GM12878 (cell line): ENCODE measurements at regions of chr9 and their contacts with region 1.

Region 1: GRCh38 chr9:87324613-87325194 is 173.0 kb upstream of the DAPK1 start:
- DNase-seq: peak; percentile 5
- ATAC-seq: peak; percentile 80
- H3K4me3 ChIP-seq: no peak overlapping the region
- H3K27ac ChIP-seq: no peak overlapping the region
- H3K4me1 ChIP-seq: no peaks in the 10 kb centered on the region
- H3K27me3 ChIP-seq: no peaks in the 10 kb centered on the region
- CTCF ChIP-seq: peak; percentile 57 to 81 (median 66)
- EP300 ChIP-seq: no peak
- POLR2A ChIP-seq: no peak
- RAD21 ChIP-seq: peak; percentile 95

Region 2: GRCh38 chr9:86413966-86414880 is 910.5 kb before region 1 on chr9:
- CTCF ChIA-PET with region 1: interaction called, 12 read pairs
- POLR2A ChIA-PET with region 1: no interaction called
- RAD21 ChIA-PET with region 1: interaction called, 8 read pairs
- SMC1A ChIA-PET with region 1: interaction called, 8 read pairs
- in situ Hi-C with region 1: no loop called
- intact Hi-C with region 1: loop called (anchors 1 kb)
- DNase-seq: no peak
- ATAC-seq: peak; percentile 60
- H3K4me3 ChIP-seq: no peak overlapping the region
- H3K27ac ChIP-seq: no peak overlapping the region
- H3K4me1 ChIP-seq: no peaks in the 10 kb centered on the region
- H3K27me3 ChIP-seq: no peaks in the 10 kb centered on the region; a peak in 1 of 4 replicates
- CTCF ChIP-seq: peak; percentile 34 to 58 (median 54); a peak in 5 of 6 replicates
- EP300 ChIP-seq: no peak
- POLR2A ChIP-seq: no peak
- RAD21 ChIP-seq: peak; percentile 61

Region 3: GRCh38 chr9:86434039-86434726 is 890.5 kb before region 1 on chr9:
- CTCF ChIA-PET with region 1: interaction called, 26 read pairs
- POLR2A ChIA-PET with region 1: no interaction called
- RAD21 ChIA-PET with region 1: interaction called, 10 read pairs
- SMC1A ChIA-PET with region 1: interaction called, 34 read pairs
- in situ Hi-C with region 1: loop called (anchors 5 kb)
- intact Hi-C with region 1: loop called (anchors 1 kb)
- DNase-seq: no peak
- ATAC-seq: peak; percentile 58; the same call in 2 of the 3 replicates
- H3K4me3 ChIP-seq: no peak overlapping the region
- H3K27ac ChIP-seq: no peak overlapping the region
- H3K4me1 ChIP-seq: no peaks in the 10 kb centered on the region
- H3K27me3 ChIP-seq: no peaks in the 10 kb centered on the region
- CTCF ChIP-seq: peak; percentile 57 to 79 (median 68)
- EP300 ChIP-seq: no peak
- POLR2A ChIP-seq: no peak
- RAD21 ChIP-seq: peak; percentile 81

Region 4: GRCh38 chr9:86486891-86487837 is 837.5 kb before region 1 on chr9:
- CTCF ChIA-PET with region 1: interaction called, 35 read pairs
- POLR2A ChIA-PET with region 1: no interaction called
- RAD21 ChIA-PET with region 1: interaction called, 8 read pairs
- SMC1A ChIA-PET with region 1: interaction called, 4 read pairs
- in situ Hi-C with region 1: loop called (anchors 5 kb)
- intact Hi-C with region 1: loop called (anchors 1 kb)
- DNase-seq: no peak
- ATAC-seq: peak; percentile 65
- H3K4me3 ChIP-seq: no peak overlapping the region
- H3K27ac ChIP-seq: no peak overlapping the region
- H3K4me1 ChIP-seq: no peaks in the 10 kb centered on the region
- H3K27me3 ChIP-seq: no peaks in the 10 kb centered on the region
- CTCF ChIP-seq: peak; percentile 40 to 55 (median 50); a peak in 5 of 6 replicates
- EP300 ChIP-seq: no peak
- POLR2A ChIP-seq: no peak
- RAD21 ChIP-seq: peak; percentile 83

Region 5: GRCh38 chr9:86614871-86615849 is 709.5 kb before region 1 on chr9:
- CTCF ChIA-PET with region 1: interaction called, 9 read pairs
- POLR2A ChIA-PET with region 1: no interaction called
- RAD21 ChIA-PET with region 1: no interaction called
- SMC1A ChIA-PET with region 1: interaction called, 4 read pairs
- in situ Hi-C with region 1: loop called (anchors 10 kb)
- intact Hi-C with region 1: loop called (anchors 5 kb)
- DNase-seq: no peak
- ATAC-seq: peak; percentile 51; the same call in 2 of the 3 replicates
- H3K4me3 ChIP-seq: no peak overlapping the region
- H3K27ac ChIP-seq: no peak overlapping the region
- H3K4me1 ChIP-seq: no peaks in the 10 kb centered on the region
- H3K27me3 ChIP-seq: no peaks in the 10 kb centered on the region
- CTCF ChIP-seq: peak; percentile 22 to 45 (median 31); a peak in 3 of 6 replicates
- EP300 ChIP-seq: no peak
- POLR2A ChIP-seq: no peak
- RAD21 ChIP-seq: 0 out of 2 replicates have a peak, but pooled peaks have one; percentile 23

Region 6: GRCh38 chr9:86948074-86948929 is 376.4 kb before region 1 on chr9:
- CTCF ChIA-PET with region 1: interaction called, 4 read pairs
- POLR2A ChIA-PET with region 1: no interaction called
- RAD21 ChIA-PET with region 1: no interaction called
- SMC1A ChIA-PET with region 1: no interaction called
- in situ Hi-C with region 1: no loop called
- intact Hi-C with region 1: loop called (anchors 10 kb)
- DNase-seq: no peak
- ATAC-seq: peak; percentile 94
- H3K4me3 ChIP-seq: peak overlapping the region; percentile 33; the same call in 1 of the 2 replicates
- H3K27ac ChIP-seq: no peak overlapping the region
- H3K4me1 ChIP-seq: no peaks in the 10 kb centered on the region
- H3K27me3 ChIP-seq: peaks cover 6 to 7% of the 10 kb centered on the region in 2 experiments
- CTCF ChIP-seq: peak; percentile 62 to 81 (median 78)
- EP300 ChIP-seq: no peak
- POLR2A ChIP-seq: no peak
- RAD21 ChIP-seq: 0 out of 2 replicates have a peak, but pooled peaks have one; percentile 39

Region 7: DNA sequence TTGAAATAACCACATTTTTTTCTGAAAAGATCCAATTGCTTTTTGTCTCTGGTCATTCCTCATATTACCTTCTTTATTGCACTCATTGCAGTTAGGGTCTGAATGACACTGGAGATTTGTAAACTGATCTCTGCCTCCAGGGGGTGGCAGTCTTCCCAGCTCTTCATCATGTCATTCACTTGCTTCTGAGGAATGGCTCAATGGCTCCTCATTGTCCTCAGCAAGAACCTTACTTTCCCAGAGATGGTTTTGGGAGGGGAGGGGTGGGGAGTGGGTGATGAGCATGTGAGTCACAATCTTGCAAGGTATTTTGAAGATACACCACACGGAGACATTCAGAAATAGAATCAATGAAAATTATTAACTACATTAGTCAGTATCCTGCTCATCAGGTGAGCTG is 217.6 kb before region 1 on chr9:
- CTCF ChIA-PET with region 1: interaction called, 6 read pairs
- POLR2A ChIA-PET with region 1: no interaction called
- RAD21 ChIA-PET with region 1: interaction called, 3 read pairs
- SMC1A ChIA-PET with region 1: interaction called, 6 read pairs
- in situ Hi-C with region 1: no loop called
- intact Hi-C with region 1: loop called (anchors 2 kb)
- DNase-seq: no peak
- ATAC-seq: no peak
- H3K4me3 ChIP-seq: no peak overlapping the region
- H3K27ac ChIP-seq: no peak overlapping the region
- H3K4me1 ChIP-seq: no peaks in the 10 kb centered on the region
- H3K27me3 ChIP-seq: peaks cover 0 to 1% of the 10 kb centered on the region in 2 experiments; a peak in 2 of 4 replicates
- CTCF ChIP-seq: peak; percentile 31 to 37 (median 31); a peak in 4 of 6 replicates
- EP300 ChIP-seq: no peak
- POLR2A ChIP-seq: no peak
- RAD21 ChIP-seq: peak; percentile 33; the same call in 1 of the 2 replicates

Region 8: GRCh38 chr9:87445646-87446045 is 120.9 kb after region 1 on chr9:
- CTCF ChIA-PET with region 1: no interaction called
- POLR2A ChIA-PET with region 1: no interaction called
- RAD21 ChIA-PET with region 1: no interaction called
- SMC1A ChIA-PET with region 1: no interaction called
- in situ Hi-C with region 1: no loop called
- intact Hi-C with region 1: no loop called
- DNase-seq: peak; percentile 44
- ATAC-seq: peak; percentile 100
- H3K4me3 ChIP-seq: peak overlapping the region; percentile 49; the same call in 1 of the 2 replicates
- H3K27ac ChIP-seq: no peak overlapping the region; the same call in 1 of the 2 replicates
- H3K4me1 ChIP-seq: peaks cover 3% of the 10 kb centered on the region; the same call in 1 of the 2 replicates
- H3K27me3 ChIP-seq: no peaks in the 10 kb centered on the region
- CTCF ChIP-seq: no peak
- EP300 ChIP-seq: no peak
- POLR2A ChIP-seq: no peak
- RAD21 ChIP-seq: no peak

Region 9: GRCh38 chr9:87547667-87548066 is 223.0 kb after region 1 on chr9:
- CTCF ChIA-PET with region 1: no interaction called
- POLR2A ChIA-PET with region 1: no interaction called
- RAD21 ChIA-PET with region 1: no interaction called
- SMC1A ChIA-PET with region 1: no interaction called
- in situ Hi-C with region 1: no loop called
- intact Hi-C with region 1: no loop called
- DNase-seq: no peak
- ATAC-seq: no peak
- H3K4me3 ChIP-seq: no peak overlapping the region
- H3K27ac ChIP-seq: no peak overlapping the region
- H3K4me1 ChIP-seq: no peaks in the 10 kb centered on the region
- H3K27me3 ChIP-seq: no peaks in the 10 kb centered on the region
- CTCF ChIP-seq: no peak; a peak in 1 of 6 replicates
- EP300 ChIP-seq: no peak
- POLR2A ChIP-seq: no peak
- RAD21 ChIP-seq: no peak